ENCODE measurements at regions of chr12 and their contacts with region 1.

Region 1: GRCh38 chr12:120012067-120012621 is 23.1 kb downstream of the BICDL1 start:
- DNase-seq: peak; percentile 84
- H3K4me3 Mint-ChIP-seq: peak overlapping the region; percentile 72
- H3K27ac Mint-ChIP-seq: peak overlapping the region; percentile 95
- H3K4me1 Mint-ChIP-seq: peaks cover 88% of the 10 kb centered on the region
- H3K27me3 Mint-ChIP-seq: no peaks in the 10 kb centered on the region

Region 2: DNA sequence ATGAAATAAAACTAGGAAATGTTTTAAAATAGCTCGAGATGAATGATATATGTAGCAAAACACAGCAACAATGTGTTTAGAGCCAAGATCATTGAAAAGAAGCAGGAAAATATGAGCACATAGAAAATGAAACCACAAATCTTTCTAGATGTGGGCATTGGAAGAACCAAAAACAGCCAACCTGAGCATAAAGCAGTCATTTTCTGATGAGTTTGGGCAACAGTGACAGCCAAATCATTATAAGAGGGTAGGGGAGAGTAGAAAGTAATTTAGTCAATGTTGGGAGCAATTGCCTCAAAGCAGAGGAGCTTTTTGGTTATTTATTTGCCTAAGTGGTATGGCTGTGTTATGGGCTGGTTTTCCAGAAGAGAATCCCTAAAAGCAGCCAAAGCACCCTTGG is 31.9 kb before region 1 on chr12:
- intact Hi-C with region 1: loop called (anchors 1 kb)
- DNase-seq: peak; percentile 9
- H3K4me3 Mint-ChIP-seq: peak overlapping the region; percentile 53
- H3K27ac Mint-ChIP-seq: peak overlapping the region; percentile 90
- H3K4me1 Mint-ChIP-seq: peaks cover 11% of the 10 kb centered on the region
- H3K27me3 Mint-ChIP-seq: peaks cover 13% of the 10 kb centered on the region

Region 3: DNA sequence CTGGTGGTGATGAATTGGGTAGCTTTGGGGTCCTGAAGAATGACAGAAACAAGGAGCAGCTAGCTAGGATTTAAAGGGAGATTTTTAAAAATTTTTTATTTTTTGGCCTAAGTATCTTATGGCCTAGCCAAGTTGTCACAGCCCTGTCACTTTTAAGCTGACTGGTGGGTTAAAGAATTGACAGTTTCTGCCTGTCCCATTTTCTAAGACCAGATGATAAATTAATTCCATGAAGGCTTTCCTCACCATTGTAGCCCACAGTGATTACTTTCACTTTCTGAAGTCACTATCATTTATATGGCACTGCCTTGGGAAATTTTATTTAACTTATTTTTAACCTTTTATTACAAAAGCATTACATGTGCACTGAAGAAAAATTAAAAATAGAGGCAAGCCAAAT is 20.1 kb after region 1 on chr12:
- intact Hi-C with region 1: loop called (anchors 1 kb)
- DNase-seq: no peak
- H3K4me3 Mint-ChIP-seq: no peak overlapping the region
- H3K27ac Mint-ChIP-seq: no peak overlapping the region
- H3K4me1 Mint-ChIP-seq: peaks cover 7% of the 10 kb centered on the region
- H3K27me3 Mint-ChIP-seq: no peaks in the 10 kb centered on the region

Region 4: DNA sequence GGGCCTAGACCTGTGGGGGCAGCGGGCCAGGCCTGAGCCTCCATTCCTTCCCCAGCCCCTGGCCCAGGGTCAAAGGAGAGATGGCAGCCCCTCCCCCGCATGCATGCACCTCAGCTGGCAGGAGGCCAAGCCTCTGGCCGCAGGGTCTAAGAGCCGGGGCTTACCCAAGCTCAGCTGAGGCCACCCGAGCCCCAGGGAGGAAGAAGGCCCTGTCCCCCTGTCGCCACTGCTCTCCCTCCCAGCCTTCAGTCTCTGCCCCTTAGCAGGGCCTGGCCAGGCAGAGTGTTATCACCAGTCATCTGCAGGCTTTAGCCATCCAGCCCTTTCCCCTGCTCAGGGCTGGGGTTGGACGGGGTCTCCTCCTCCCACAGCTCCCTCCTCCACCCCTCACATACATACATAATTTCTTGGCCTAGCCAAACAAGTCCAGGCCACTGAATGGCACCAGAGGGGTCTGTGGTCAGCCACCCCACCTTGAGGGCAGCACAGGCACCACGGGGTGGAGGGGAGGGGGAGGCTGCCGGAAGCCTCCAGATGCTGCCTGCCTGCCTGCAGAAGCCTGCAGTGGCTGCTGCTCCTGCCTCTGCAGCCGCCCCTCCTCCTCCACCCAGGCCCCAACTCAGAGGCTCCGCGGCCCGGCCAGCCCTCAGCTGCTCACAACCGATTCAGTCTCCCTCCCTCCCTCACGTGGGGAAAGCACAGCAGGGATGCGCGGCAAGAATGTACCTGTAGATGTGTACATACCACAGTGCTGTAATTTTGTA is 81.6 kb after region 1 on chr12:
- intact Hi-C with region 1: no loop called
- DNase-seq: no peak
- H3K4me3 Mint-ChIP-seq: no peak overlapping the region
- H3K27ac Mint-ChIP-seq: no peak overlapping the region
- H3K4me1 Mint-ChIP-seq: no peaks in the 10 kb centered on the region
- H3K27me3 Mint-ChIP-seq: peaks cover 1% of the 10 kb centered on the region

Region 5: GRCh38 chr12:120194534-120195395 is 182.6 kb after region 1 on chr12 and contains the start of gene GCN1:
- intact Hi-C with region 1: loop called (anchors 1 kb)
- DNase-seq: peak; percentile 86
- H3K4me3 Mint-ChIP-seq: peak within 1 kb of the TSS; percentile 91
- H3K27ac Mint-ChIP-seq: peak within 1 kb of the TSS; percentile 96
- H3K4me1 Mint-ChIP-seq: peaks cover 60% of the 10 kb centered on the region
- H3K27me3 Mint-ChIP-seq: no peaks in the 10 kb centered on the region
- total RNA-seq, gene GCN1: 164 and 173 TPM in 2 replicates